Posterior vena cava (tissue), 2 donors: ENCODE measurements at regions of chr1 and their contacts with region 1.

Region 1: DNA sequence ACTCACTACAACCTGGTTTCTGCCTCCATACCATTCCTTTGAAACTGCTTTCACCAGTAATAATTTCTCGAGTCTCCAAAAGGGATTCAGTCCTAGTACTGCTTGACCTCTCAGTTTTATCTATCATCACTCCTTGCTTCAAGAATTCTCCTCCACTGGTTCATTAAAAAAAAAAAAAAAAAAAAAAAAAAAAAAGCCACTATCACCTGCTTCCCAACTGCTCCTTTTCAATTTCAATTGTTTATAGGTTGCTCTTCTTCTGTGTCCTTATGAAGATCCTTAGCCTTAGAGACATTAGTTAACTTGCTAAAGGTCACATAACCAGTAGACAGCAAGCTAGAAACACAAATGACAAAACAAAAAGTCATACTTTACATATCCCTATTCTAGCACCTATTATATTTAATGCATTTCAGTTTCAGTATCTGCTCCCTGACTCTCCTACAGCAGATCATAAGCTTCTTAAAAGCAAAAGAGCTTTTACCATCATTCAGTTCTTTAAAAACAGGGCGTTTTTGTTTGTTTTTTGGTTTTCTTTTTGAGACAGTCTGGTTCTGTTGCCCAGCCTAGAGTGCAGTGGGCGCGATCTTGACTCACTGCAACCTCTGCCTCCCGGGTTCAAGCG is 7.1 kb downstream of the NRDC start:
- DNase-seq: no peak

Region 2: GRCh38 chr1:51270751-51271150 is 600.7 kb before region 1 on chr1:
- intact Hi-C with region 1: loop called in 1 of 2 experiments (anchors 5 kb)
- DNase-seq: no peak